ENCODE measurements at regions of chr17 and their contacts with region 1.

Region 1: GRCh38 chr17:8041249-8041928 is 2.5 kb downstream of the ALOX15B start:
- DNase-seq: peak; percentile 65
- CTCF ChIP-seq: peak; percentile 47

Region 2: DNA sequence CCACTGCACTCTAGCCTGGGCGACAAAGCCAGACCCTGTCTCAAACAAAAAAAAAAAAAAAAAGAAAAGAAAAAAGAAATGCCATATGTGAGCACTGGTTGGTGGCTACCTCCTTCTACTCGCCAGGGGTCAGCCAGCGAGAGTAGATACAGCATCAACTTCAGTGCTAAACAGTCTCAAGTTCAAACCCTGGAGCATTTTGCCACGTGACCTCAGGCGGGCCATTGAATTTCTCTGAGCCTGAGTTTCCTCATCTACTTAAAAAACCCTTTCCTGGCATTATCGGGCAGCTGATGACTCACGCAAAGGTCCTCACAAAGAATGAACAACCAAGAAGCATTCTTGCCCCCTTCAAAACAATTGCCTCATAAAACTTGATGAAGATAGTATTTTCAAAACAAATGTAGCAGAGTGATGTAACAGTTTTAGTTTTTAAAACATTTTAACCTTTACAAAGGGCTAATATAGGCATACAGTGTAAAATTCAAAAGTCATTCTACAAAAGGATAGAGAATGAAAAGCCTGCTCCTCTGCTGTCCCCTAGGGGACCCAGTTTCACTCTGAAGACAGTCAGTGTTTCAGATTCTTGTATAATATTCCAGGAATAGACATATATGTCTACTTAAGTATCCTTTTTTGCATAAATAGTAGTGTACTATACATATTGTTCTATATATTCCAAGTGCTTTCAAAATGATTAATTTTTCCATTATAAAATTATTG is 295.5 kb before region 1 on chr17:
- CTCF ChIA-PET with region 1: interaction called, 20 read pairs
- POLR2A ChIA-PET with region 1: no interaction called
- DNase-seq: no peak
- CTCF ChIP-seq: no peak

Region 3: DNA sequence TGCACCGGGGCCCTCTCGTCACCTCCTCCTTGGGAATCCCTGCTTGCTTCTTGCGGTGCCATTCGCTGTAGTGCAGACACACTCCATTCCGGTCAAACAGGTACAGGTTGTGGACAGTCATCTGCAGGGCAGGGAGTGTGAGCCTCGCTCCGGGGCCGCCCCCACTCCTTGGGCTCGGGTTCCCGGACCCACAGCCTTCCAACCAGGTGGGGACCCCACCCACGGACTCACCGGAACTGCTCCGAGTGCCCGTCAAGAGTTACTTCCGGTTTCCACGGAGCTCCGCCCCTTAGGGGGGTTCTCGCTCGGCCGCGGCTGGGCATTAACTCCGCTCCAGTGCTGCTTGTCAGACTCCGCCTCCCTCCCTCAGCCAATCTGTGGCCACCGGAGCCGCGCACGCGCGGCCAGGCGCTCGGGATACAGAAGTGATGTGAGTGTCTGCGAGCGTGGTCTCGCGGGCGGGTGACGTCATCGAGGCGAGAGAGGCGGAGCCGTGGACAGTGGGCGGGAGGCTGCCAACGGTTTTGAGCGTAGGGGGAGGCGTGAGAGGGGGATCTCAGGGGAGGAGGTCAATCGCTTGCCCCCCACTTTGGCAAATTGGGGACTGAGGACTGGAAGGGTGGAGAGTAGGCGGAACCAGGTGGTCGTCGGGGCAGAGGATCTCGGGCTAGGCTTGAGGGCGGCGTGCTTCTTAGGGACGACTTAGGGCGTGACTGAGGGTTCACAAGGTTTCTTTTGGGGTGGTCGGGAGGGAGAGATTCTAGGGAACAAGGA is 109.5 kb before region 1 on chr17 and contains the starts of genes CNTROB and TRAPPC1:
- CTCF ChIA-PET with region 1: interaction called, 11 read pairs
- POLR2A ChIA-PET with region 1: no interaction called
- DNase-seq: peak; percentile 100
- CTCF ChIP-seq: no peak

Region 4: DNA sequence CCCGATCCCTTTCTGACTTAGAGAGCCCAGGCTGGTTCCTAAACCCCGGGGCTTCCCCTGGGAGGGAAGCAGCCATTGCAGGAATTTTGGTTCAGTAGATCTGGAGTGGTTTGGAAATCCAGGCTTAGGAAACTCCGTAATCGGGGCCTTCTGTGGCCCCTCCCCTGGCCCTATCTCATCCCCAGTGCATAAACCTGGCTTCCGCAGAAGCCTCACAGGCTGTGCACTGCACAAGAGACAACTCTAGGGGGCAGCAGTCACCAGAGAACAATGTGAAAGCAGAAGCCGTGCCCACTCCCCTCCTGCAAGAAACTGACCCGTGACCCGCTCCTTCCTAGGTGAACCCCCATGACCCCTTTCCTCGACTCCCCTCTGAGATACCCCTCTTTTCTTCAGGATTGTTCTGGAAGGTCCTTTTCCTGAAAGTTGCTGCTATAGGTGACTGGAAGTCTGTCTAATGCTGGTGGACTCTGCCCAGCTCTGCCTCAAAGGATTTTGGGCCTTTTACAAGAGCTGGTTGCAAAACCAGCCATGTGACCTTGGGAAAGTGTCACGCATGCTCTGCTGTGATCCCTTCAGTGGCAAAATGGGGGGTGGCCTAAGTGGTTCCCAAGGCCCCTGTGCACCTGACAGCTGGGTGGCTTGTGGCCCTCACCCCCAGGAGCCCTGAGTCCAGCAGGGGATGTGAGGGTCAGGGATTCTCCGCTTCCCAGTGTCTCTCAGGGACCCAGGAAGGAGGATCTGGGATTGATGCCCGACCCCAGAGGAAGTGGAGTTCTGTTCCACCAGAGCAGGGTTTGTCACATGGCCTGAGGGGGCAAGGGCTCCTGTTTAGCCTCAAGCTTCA is 24.5 kb before region 1 on chr17:
- CTCF ChIA-PET with region 1: interaction called, 40 read pairs
- POLR2A ChIA-PET with region 1: no interaction called
- DNase-seq: peak; percentile 55
- CTCF ChIP-seq: peak; percentile 72

Region 5: GRCh38 chr17:8029135-8029534 is 12.3 kb before region 1 on chr17:
- CTCF ChIA-PET with region 1: interaction called, 14 read pairs
- POLR2A ChIA-PET with region 1: no interaction called
- DNase-seq: no peak
- CTCF ChIP-seq: no peak

Region 6: GRCh38 chr17:8073627-8074484 is 32.5 kb after region 1 on chr17:
- CTCF ChIA-PET with region 1: interaction called, 15 read pairs
- POLR2A ChIA-PET with region 1: no interaction called
- DNase-seq: peak; percentile 90
- CTCF ChIP-seq: peak; percentile 93